Left lung (tissue), 14 donors: ENCODE measurements at regions of chr14 and their contacts with region 1.

Region 1: DNA sequence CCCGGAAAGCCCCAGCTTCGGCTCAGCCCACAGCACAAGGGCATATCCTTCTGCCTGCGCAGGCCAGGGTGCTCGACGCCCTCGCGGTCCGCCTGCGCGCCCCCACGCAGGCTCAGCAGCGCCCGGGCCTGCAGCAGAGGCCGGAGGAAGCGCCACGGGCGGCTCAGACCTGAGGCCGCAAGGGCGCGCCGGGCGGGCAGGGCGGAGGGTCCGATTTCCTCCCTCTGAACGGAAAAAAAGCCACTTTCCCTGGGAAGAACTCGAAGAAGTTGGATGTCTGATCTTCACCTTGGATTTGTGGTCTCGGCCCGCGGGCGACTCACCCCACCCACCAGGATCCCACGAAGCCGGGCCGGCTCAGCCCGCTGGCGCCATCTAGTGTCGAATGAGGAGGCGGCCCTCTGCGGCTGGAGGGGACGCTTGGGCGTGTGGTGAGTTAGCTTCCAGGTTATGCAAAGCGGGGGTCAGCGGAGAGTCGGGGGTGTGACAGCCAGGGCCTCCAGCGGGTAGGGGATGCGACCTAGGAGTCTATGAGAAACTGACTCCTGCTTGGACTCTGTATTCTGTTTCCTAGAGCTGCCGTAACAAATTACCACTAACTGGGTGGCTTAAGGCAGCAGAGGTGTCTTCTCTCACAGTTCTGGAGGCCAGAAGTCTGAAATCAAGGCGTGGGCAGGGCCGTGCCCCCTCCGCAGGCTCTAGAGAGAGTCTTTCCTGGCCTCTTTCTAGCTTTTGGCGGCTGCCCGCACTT is 40.0 kb upstream of the SRSF5 start:
- DNase-seq: peak; percentile 79 to 97 (median 85)
- ATAC-seq: peak; percentile 97
- H3K4me3 ChIP-seq: peak overlapping the region; percentile 32 to 38
- H3K27ac ChIP-seq: peak overlapping the region; percentile 76
- H3K4me1 ChIP-seq: peaks cover 7 to 40% of the 10 kb centered on the region in 2 donors
- H3K27me3 ChIP-seq: no peaks in the 10 kb centered on the region
- CTCF ChIP-seq: peak; percentile 97 to 98

Region 2: GRCh38 chr14:69170839-69171238 is 556.1 kb before region 1 on chr14:
- intact Hi-C with region 1: no loop called
- DNase-seq: no peak
- ATAC-seq: no peak
- H3K4me3 ChIP-seq: no peak overlapping the region
- H3K27ac ChIP-seq: no peak overlapping the region
- H3K4me1 ChIP-seq: no peaks in the 10 kb centered on the region
- H3K27me3 ChIP-seq: no peaks in the 10 kb centered on the region
- CTCF ChIP-seq: no peak

Region 3: DNA sequence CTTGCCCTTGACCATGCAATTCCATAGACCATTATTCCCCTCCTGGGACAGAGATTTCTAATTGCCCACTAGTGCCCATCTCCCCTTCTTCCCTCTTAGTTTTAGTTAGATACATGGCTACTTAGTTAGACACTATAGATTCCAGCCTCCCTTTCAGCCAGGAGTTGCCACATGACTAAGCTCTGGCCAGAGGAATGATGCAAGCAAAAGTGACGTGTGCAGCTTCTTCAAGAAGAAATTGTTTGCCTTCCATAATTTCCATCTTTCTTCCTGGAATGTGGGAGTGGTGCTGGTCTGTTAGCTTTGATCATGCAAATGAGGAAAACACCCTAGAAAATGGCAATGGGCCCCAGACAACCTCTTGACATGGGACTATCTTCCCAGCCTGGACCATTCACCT is 173.7 kb before region 1 on chr14:
- intact Hi-C with region 1: no loop called
- DNase-seq: peak in 1 of 4 donors; percentile 62
- ATAC-seq: peak; percentile 81
- H3K4me3 ChIP-seq: no peak overlapping the region
- H3K27ac ChIP-seq: no peak overlapping the region
- H3K4me1 ChIP-seq: no peaks in the 10 kb centered on the region
- H3K27me3 ChIP-seq: peaks cover 2 to 66% of the 10 kb centered on the region in 2 donors
- CTCF ChIP-seq: no peak

Region 4: DNA sequence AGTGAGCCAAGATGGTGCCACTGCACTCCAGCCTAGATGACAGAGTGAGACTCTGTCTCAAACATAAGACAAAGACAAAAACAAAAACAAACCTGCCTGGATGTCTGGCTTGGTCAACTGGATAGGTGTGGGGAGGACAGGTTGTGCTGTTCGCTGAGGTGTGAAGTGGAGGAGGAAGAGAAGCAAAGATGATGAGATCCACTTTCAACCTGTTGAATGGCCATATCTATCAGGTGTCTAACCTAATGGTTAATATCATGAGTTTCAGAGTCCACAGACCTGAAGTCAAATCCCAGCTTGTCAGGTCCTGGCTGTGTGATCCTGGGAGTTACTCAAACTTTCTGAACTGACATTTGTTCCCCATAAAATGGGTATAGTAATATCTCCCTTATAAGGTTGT is 142.5 kb before region 1 on chr14:
- intact Hi-C with region 1: loop called in 1 of 2 experiments (anchors 2 kb)
- DNase-seq: no peak
- ATAC-seq: no peak
- H3K4me3 ChIP-seq: no peak overlapping the region
- H3K27ac ChIP-seq: no peak overlapping the region
- H3K4me1 ChIP-seq: peaks cover 0 to 5% of the 10 kb centered on the region in 2 donors
- H3K27me3 ChIP-seq: no peaks in the 10 kb centered on the region
- CTCF ChIP-seq: no peak

Region 5: GRCh38 chr14:69593018-69593677 is 133.8 kb before region 1 on chr14:
- intact Hi-C with region 1: loop called in 1 of 2 experiments (anchors 10 kb)
- DNase-seq: peak in 2 of 4 donors; percentile 83 to 90
- ATAC-seq: peak; percentile 57
- H3K4me3 ChIP-seq: no peak overlapping the region
- H3K27ac ChIP-seq: no peak overlapping the region
- H3K4me1 ChIP-seq: no peaks in the 10 kb centered on the region
- H3K27me3 ChIP-seq: no peaks in the 10 kb centered on the region
- CTCF ChIP-seq: no peak

Region 6: DNA sequence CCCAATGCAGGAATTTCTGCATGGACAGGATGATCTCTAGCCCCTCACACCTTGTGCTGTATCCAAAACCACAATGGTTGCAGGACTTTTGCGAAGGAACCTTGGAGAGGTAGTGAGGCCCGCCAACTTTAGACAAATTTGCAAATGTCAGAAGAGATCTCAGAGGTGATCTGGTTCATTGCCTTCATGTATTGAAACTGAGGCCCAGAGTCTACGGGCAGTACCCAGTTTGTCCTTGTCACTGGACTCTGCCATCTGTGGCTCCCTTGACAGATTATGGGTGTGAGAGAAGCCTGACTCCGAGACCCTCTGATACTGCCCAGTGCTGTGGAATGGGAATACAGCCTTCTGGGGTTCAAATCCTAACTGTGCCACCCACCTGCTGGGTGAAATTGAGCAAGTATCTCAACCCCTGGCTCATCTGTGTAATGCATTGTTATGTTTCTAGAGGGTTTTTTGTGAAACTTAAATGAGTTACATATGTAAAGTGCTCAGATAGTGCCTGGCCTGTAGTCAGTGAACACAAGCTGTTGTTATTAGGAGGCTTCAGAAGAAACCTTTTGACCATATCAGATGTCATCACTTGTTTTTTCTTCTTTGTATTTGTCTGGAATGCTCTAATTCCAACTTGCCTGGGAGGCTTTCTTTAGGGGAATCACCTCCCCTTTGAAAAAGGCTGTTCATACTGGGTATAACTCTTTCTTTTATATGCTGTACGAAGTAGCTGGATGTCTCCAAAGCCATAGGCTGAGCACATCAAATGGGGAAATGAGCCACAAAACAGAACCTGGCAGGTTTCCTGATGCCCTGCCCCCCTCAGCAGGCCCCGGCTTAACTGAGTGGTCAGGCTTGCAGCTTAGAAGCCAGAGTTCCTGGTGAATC is 31.4 kb before region 1 on chr14:
- intact Hi-C with region 1: no loop called
- DNase-seq: peak in 1 of 4 donors; percentile 57
- ATAC-seq: peak; percentile 38
- H3K4me3 ChIP-seq: no peak overlapping the region
- H3K27ac ChIP-seq: peak overlapping the region; percentile 65 to 89
- H3K4me1 ChIP-seq: peaks cover 50 to 94% of the 10 kb centered on the region in 2 donors
- H3K27me3 ChIP-seq: no peaks in the 10 kb centered on the region
- CTCF ChIP-seq: no peak